Posterior cingulate gyrus (tissue), 11 donors: ENCODE measurements at regions of chr9 and their contacts with region 1.

Region 1: DNA sequence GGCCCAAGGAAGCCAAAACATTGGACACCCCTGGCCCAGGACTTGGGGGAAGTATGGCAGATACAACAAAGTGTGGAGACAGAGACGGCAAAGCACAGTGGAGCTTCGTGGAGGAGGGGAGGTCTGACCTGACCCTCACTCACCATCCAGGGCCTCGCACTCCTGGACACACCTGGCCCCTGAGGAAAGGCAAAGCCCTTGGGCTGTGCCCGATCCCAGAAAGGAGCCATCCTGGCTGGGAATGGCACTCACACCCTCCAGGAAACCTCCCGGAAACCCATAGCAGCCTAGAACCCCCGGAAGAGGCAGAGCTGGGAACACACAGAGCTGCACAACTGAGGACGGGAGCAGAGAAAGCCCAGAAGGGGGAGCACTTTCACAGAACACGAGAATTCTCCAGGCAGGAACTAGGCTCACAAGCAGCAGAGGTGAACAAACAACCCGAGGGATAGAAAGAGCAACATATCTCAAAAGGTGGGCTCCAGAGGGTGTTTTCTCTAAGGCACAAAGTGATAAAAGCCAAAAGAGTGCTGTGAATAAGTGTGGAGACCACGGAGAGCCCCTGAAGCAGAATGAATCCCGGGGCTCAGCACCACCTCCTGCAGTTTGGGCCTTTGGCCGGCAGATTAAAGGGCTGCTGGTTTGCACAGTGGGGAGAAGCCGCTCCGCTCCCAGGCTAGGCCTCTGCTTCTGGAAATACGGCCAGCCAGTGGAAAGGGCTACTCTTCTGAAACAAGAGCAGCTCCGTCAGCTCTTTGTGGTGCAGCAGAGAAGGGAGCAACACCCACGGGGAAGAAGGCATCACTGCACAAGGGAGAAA is 108.2 kb downstream of the UBE2R2 start:
- DNase-seq: peak in 8 of 10 donors; percentile 31 to 90 (median 62)

Region 2: GRCh38 chr9:34048923-34049697 is 123.9 kb after region 1 on chr9:
- intact Hi-C with region 1: loop called (anchors 10 kb)
- DNase-seq: peak; percentile 96 to 100 (median 99)

Region 3: GRCh38 chr9:34072868-34073590 is 147.8 kb after region 1 on chr9:
- intact Hi-C with region 1: loop called (anchors 1 kb)
- DNase-seq: no peak